AG04449 (cell line): ENCODE measurements at regions of chr11 and their contacts with region 1.

Region 1: GRCh38 chr11:92269021-92269420 is 44.4 kb downstream of the FAT3 start:
- DNase-seq: peak; percentile 42
- H3K4me3 ChIP-seq: no peak overlapping the region
- CTCF ChIP-seq: no peak

Region 2: GRCh38 chr11:92251980-92252379 is 17.0 kb before region 1 on chr11:
- CTCF ChIA-PET with region 1: interaction called, 9 read pairs
- POLR2A ChIA-PET with region 1: interaction called, 10 read pairs
- DNase-seq: peak; percentile 72
- H3K4me3 ChIP-seq: no peak overlapping the region
- CTCF ChIP-seq: no peak

Region 3: DNA sequence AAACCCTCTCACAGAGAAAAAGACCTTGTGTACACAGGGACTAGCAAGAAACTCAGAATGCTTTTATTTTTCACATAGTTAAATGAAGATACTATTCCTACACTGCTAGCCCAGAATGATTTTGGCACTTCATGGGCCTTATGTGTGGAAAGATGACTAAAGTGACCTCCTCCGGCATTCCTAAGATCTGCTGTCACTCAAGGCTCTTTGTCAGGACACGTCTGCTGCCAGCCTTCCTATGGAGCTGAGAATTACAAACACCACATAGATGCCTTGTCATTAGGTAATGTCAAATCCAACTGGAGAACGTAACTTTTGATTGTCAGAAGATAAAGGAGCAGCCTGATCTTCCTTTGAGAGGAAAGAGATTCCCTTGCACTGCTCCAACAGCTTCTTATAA is 204.7 kb after region 1 on chr11:
- CTCF ChIA-PET with region 1: no interaction called
- POLR2A ChIA-PET with region 1: no interaction called
- DNase-seq: no peak
- H3K4me3 ChIP-seq: no peak overlapping the region
- CTCF ChIP-seq: no peak

Region 4: GRCh38 chr11:92663539-92663938 is 394.5 kb after region 1 on chr11:
- CTCF ChIA-PET with region 1: no interaction called
- POLR2A ChIA-PET with region 1: no interaction called
- DNase-seq: peak; percentile 7
- H3K4me3 ChIP-seq: no peak overlapping the region
- CTCF ChIP-seq: no peak